Activated CD4-positive, alpha-beta T cell treated with anti-CD3 and anti-CD28 coated beads for 36 hours (primary cell): ENCODE measurements at regions of chr2 and their contacts with region 1.

Region 1: GRCh38 chr2:144516981-144517865 is 2.7 kb downstream of the ZEB2 start:
- DNase-seq: peak; percentile 76
- ATAC-seq: peak; percentile 80
- H3K4me3 Mint-ChIP-seq: no peak overlapping the region
- H3K27ac Mint-ChIP-seq: peak overlapping the region; percentile 96
- H3K4me1 Mint-ChIP-seq: peaks cover 17% of the 10 kb centered on the region
- H3K27me3 Mint-ChIP-seq: peaks cover 44% of the 10 kb centered on the region

Region 2: GRCh38 chr2:143696651-143697050 is 820.6 kb before region 1 on chr2:
- CTCF ChIA-PET with region 1: no interaction called
- POLR2A ChIA-PET with region 1: no interaction called
- intact Hi-C with region 1: loop called in 1 of 2 experiments (anchors 2 kb)
- DNase-seq: no peak
- ATAC-seq: no peak
- H3K4me3 Mint-ChIP-seq: no peak overlapping the region
- H3K27ac Mint-ChIP-seq: no peak overlapping the region
- H3K4me1 Mint-ChIP-seq: peaks cover 56% of the 10 kb centered on the region
- H3K27me3 Mint-ChIP-seq: no peaks in the 10 kb centered on the region

Region 3: DNA sequence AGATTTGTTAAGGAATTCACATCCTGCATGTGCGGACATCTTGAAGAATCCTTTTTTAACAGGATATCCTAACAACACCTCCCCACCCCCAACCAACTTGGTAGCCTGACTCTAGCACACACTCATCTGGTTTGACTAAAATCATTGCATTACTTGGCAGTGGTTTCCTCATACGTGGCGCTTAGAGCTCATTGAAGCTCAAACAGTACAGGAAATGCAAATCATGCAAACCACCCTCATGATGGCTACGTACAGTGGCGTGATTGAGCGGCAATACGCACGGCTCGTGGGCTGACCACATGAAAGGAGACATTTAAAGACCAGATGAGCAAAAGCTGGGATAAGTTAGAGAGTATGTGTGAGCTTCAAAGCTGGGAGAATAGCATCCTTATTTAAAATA is 333.5 kb before region 1 on chr2:
- CTCF ChIA-PET with region 1: no interaction called
- POLR2A ChIA-PET with region 1: no interaction called
- intact Hi-C with region 1: loop called (anchors 5 kb)
- DNase-seq: peak; percentile 89
- ATAC-seq: peak; percentile 100
- H3K4me3 Mint-ChIP-seq: peak overlapping the region; percentile 52
- H3K27ac Mint-ChIP-seq: peak overlapping the region; percentile 86
- H3K4me1 Mint-ChIP-seq: peaks cover 40% of the 10 kb centered on the region
- H3K27me3 Mint-ChIP-seq: no peaks in the 10 kb centered on the region

Region 4: DNA sequence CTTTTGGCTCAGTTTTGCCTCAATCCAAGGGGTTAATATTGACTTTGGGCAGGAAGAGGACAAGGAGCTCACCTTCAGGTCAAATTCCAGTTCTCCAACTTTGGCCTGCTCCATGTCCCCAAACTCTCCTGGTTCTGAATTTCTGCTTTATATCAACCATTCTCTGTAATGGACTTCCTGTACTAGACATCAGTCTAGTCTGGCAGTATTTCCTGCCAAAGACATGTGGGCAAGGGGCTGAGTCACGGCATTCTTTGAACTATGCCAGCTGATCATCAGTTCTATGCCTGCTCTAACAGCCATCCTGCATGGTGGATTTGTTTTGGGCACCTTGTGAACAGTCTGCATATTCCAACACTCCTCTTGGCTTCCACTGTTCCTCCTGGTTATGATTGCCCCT is 196.7 kb before region 1 on chr2:
- CTCF ChIA-PET with region 1: no interaction called
- POLR2A ChIA-PET with region 1: no interaction called
- intact Hi-C with region 1: loop called (anchors 2 kb)
- DNase-seq: peak; percentile 70
- ATAC-seq: peak; percentile 49
- H3K4me3 Mint-ChIP-seq: peak overlapping the region; percentile 13
- H3K27ac Mint-ChIP-seq: peak overlapping the region; percentile 71
- H3K4me1 Mint-ChIP-seq: peaks cover 47% of the 10 kb centered on the region
- H3K27me3 Mint-ChIP-seq: no peaks in the 10 kb centered on the region

Region 5: GRCh38 chr2:144454466-144455287 is 62.5 kb before region 1 on chr2:
- CTCF ChIA-PET with region 1: no interaction called
- POLR2A ChIA-PET with region 1: no interaction called
- intact Hi-C with region 1: loop called in 1 of 2 experiments (anchors 2 kb)
- DNase-seq: peak; percentile 36
- ATAC-seq: peak; percentile 82
- H3K4me3 Mint-ChIP-seq: no peak overlapping the region
- H3K27ac Mint-ChIP-seq: peak overlapping the region; percentile 16
- H3K4me1 Mint-ChIP-seq: peaks cover 48% of the 10 kb centered on the region
- H3K27me3 Mint-ChIP-seq: peaks cover 21% of the 10 kb centered on the region

Region 6: GRCh38 chr2:145144131-145144728 is 627.0 kb after region 1 on chr2:
- CTCF ChIA-PET with region 1: no interaction called
- POLR2A ChIA-PET with region 1: interaction called, 12 read pairs
- intact Hi-C with region 1: no loop called
- DNase-seq: no peak
- ATAC-seq: no peak
- H3K4me3 Mint-ChIP-seq: no peak overlapping the region
- H3K27ac Mint-ChIP-seq: no peak overlapping the region
- H3K4me1 Mint-ChIP-seq: no peaks in the 10 kb centered on the region
- H3K27me3 Mint-ChIP-seq: no peaks in the 10 kb centered on the region